ENCODE measurements at regions of chr15 and their contacts with region 1.

Region 1: GRCh38 chr15:90201130-90201949 is at the start of gene SEMA4B:
- DNase-seq: peak; percentile 44 to 88 (median 70)
- ATAC-seq: peak; percentile 94
- H3K4me3 ChIP-seq: peak within 1 kb of the TSS; percentile 78
- H3K4me3 Mint-ChIP-seq: peak within 1 kb of the TSS; percentile 88
- H3K27ac ChIP-seq: peak within 1 kb of the TSS; percentile 5 to 36
- H3K27ac Mint-ChIP-seq: peak within 1 kb of the TSS; percentile 74
- H3K4me1 ChIP-seq: peaks cover 28% of the 10 kb centered on the region
- H3K4me1 Mint-ChIP-seq: peaks cover 28% of the 10 kb centered on the region
- H3K27me3 ChIP-seq: no peaks in the 10 kb centered on the region
- H3K27me3 Mint-ChIP-seq: no peaks in the 10 kb centered on the region
- CTCF ChIP-seq: no peak
- total RNA-seq, gene SEMA4B: 8.0 to 9.5 TPM

Region 2: GRCh38 chr15:89936051-89936785 is 265.1 kb before region 1 on chr15:
- CTCF ChIA-PET with region 1: no interaction called
- POLR2A ChIA-PET with region 1: no interaction called
- intact Hi-C with region 1: no loop called
- DNase-seq: peak in 6 of 14 experiments; percentile 4 to 62 (median 47)
- ATAC-seq: peak; percentile 86
- H3K4me3 ChIP-seq: no peak overlapping the region
- H3K4me3 Mint-ChIP-seq: no peak overlapping the region
- H3K27ac ChIP-seq: no peak overlapping the region
- H3K27ac Mint-ChIP-seq: no peak overlapping the region
- H3K4me1 ChIP-seq: peaks cover 15% of the 10 kb centered on the region
- H3K4me1 Mint-ChIP-seq: peaks cover 20% of the 10 kb centered on the region
- H3K27me3 ChIP-seq: no peaks in the 10 kb centered on the region
- H3K27me3 Mint-ChIP-seq: no peaks in the 10 kb centered on the region
- CTCF ChIP-seq: no peak

Region 3: GRCh38 chr15:90031231-90031791 is 170.0 kb before region 1 on chr15:
- CTCF ChIA-PET with region 1: no interaction called
- POLR2A ChIA-PET with region 1: no interaction called
- intact Hi-C with region 1: no loop called
- DNase-seq: peak in 3 of 14 experiments; percentile 46 to 59 (median 54)
- ATAC-seq: peak; percentile 39
- H3K4me3 ChIP-seq: no peak overlapping the region
- H3K4me3 Mint-ChIP-seq: peak overlapping the region; percentile 68
- H3K27ac ChIP-seq: no peak overlapping the region
- H3K27ac Mint-ChIP-seq: peak overlapping the region; percentile 43
- H3K4me1 ChIP-seq: peaks cover 53% of the 10 kb centered on the region
- H3K4me1 Mint-ChIP-seq: peaks cover 48% of the 10 kb centered on the region
- H3K27me3 ChIP-seq: no peaks in the 10 kb centered on the region
- H3K27me3 Mint-ChIP-seq: no peaks in the 10 kb centered on the region
- CTCF ChIP-seq: no peak

Region 4: GRCh38 chr15:90265271-90266060 is 64.1 kb after region 1 on chr15 and contains the start of gene NGRN:
- CTCF ChIA-PET with region 1: no interaction called
- POLR2A ChIA-PET with region 1: interaction called, 15 read pairs
- intact Hi-C with region 1: no loop called
- DNase-seq: peak; percentile 83 to 95 (median 90)
- ATAC-seq: peak; percentile 79
- H3K4me3 ChIP-seq: peak within 1 kb of the TSS; percentile 74
- H3K4me3 Mint-ChIP-seq: peak within 1 kb of the TSS; percentile 90
- H3K27ac ChIP-seq: peak within 1 kb of the TSS; percentile 94 to 97
- H3K27ac Mint-ChIP-seq: peak within 1 kb of the TSS; percentile 98
- H3K4me1 ChIP-seq: peaks cover 48% of the 10 kb centered on the region
- H3K4me1 Mint-ChIP-seq: peaks cover 57% of the 10 kb centered on the region
- H3K27me3 ChIP-seq: no peaks in the 10 kb centered on the region
- H3K27me3 Mint-ChIP-seq: no peaks in the 10 kb centered on the region
- CTCF ChIP-seq: no peak
- total RNA-seq, gene NGRN: 55.7 to 58.4 TPM